ENCODE measurements at regions of chr16 and their contacts with region 1.

Region 1: GRCh38 chr16:21554795-21555585 is 44.4 kb upstream of the METTL9 start:
- DNase-seq: peak; percentile 77 to 93 (median 86)
- H3K4me3 ChIP-seq: no peak overlapping the region
- H3K27ac ChIP-seq: no peak overlapping the region
- H3K4me1 ChIP-seq: no peaks in the 10 kb centered on the region
- H3K27me3 ChIP-seq: no peaks in the 10 kb centered on the region
- CTCF ChIP-seq: peak; percentile 70 to 98 (median 85)
- EP300 ChIP-seq: no peak
- POLR2A ChIP-seq: peak; percentile 22

Region 2: GRCh38 chr16:21300309-21301167 is 254.5 kb before region 1 on chr16:
- intact Hi-C with region 1: loop called in 2 of 4 experiments (anchors 5 to 10 kb)
- DNase-seq: peak; percentile 88 to 97 (median 96)
- H3K4me3 ChIP-seq: peak overlapping the region; percentile 54
- H3K27ac ChIP-seq: peak overlapping the region; percentile 22 to 60
- H3K4me1 ChIP-seq: no peaks in the 10 kb centered on the region
- H3K27me3 ChIP-seq: no peaks in the 10 kb centered on the region
- CTCF ChIP-seq: peak; percentile 88 to 89 (median 89)
- EP300 ChIP-seq: no peak
- POLR2A ChIP-seq: no peak

Region 3: GRCh38 chr16:21501909-21502667 is 52.9 kb before region 1 on chr16:
- intact Hi-C with region 1: loop called in 1 of 4 experiments (anchors 10 kb)
- DNase-seq: peak; percentile 89 to 98 (median 94)
- H3K4me3 ChIP-seq: peak overlapping the region; percentile 70
- H3K27ac ChIP-seq: peak overlapping the region; percentile 75 to 80
- H3K4me1 ChIP-seq: no peaks in the 10 kb centered on the region
- H3K27me3 ChIP-seq: no peaks in the 10 kb centered on the region
- CTCF ChIP-seq: no peak
- EP300 ChIP-seq: no peak
- POLR2A ChIP-seq: peak; percentile 76